Activated naive CD4-positive, alpha-beta T cell treated with anti-CD3 and anti-CD28 coated beads for 36 hours (primary cell): ENCODE measurements at regions of chr11 and their contacts with region 1.

Region 1: GRCh38 chr11:66408488-66409214 is 12.2 kb upstream of the NPAS4 start:
- DNase-seq: peak; percentile 93
- H3K4me3 Mint-ChIP-seq: peak overlapping the region; percentile 68
- H3K27ac Mint-ChIP-seq: no peak overlapping the region
- H3K4me1 Mint-ChIP-seq: peaks cover 4% of the 10 kb centered on the region
- H3K27me3 Mint-ChIP-seq: peaks cover 9% of the 10 kb centered on the region

Region 2: DNA sequence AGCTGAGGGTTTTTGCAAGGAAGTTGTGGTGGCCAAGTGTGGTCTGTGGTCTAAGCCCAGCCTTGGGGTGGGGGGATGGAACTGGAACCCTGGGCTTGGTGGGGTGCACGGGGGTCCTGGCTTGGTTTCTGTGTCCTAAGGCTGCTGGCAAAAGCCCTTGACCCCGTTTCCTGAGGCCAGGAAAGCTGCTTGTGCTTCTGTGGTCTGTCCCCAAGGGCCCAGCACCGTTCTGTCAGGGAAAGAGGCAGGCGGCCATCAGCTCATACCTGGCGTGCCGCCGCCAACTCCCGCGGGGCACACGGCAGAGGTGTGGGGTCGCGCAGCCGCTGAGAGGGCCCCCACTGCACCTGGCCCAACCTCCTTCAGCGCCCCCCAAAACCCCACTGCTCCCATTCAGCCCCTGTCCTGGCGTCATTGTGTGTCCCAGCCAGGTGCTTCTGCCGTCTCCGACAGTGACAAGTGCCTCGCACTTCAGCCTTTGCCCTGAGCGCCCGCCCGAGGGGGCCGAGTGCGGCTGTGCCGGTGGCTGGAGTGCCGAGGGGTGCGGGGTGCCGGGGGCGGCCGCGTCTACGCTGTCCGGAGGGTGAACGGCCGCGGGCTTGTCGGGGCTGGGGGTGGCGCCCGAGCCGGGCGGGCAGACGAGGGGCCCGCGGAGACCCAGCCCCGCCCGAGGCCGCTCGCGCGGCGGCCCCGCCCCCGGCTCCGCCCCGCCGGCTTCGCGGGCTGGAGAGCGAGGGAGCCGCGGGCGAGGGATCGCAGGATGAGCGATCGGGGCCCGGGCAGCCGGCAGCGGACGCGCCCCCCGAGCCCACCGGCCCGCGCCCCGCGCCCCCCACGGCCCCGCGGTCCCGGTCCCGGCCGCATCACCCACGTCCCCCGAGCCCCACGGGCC is 130.9 kb before region 1 on chr11 and contains the start of gene CNIH2:
- CTCF ChIA-PET with region 1: no interaction called
- intact Hi-C with region 1: no loop called
- DNase-seq: no peak
- H3K4me3 Mint-ChIP-seq: peak within 1 kb of the TSS; percentile 62
- H3K27ac Mint-ChIP-seq: no peak within 1 kb of the TSS
- H3K4me1 Mint-ChIP-seq: peaks cover 17% of the 10 kb centered on the region
- H3K27me3 Mint-ChIP-seq: no peaks in the 10 kb centered on the region
- total RNA-seq, gene CNIH2: 1.2 to 1.6 TPM

Region 3: GRCh38 chr11:66371627-66372415 is 36.8 kb before region 1 on chr11 and contains the start of gene SLC29A2:
- CTCF ChIA-PET with region 1: no interaction called
- intact Hi-C with region 1: loop called (anchors 1 kb)
- DNase-seq: peak; percentile 80
- H3K4me3 Mint-ChIP-seq: peak within 1 kb of the TSS; percentile 83
- H3K27ac Mint-ChIP-seq: peak within 1 kb of the TSS; percentile 90
- H3K4me1 Mint-ChIP-seq: peaks cover 15% of the 10 kb centered on the region
- H3K27me3 Mint-ChIP-seq: no peaks in the 10 kb centered on the region
- total RNA-seq, gene SLC29A2: 6.6 to 7.4 TPM

Region 4: DNA sequence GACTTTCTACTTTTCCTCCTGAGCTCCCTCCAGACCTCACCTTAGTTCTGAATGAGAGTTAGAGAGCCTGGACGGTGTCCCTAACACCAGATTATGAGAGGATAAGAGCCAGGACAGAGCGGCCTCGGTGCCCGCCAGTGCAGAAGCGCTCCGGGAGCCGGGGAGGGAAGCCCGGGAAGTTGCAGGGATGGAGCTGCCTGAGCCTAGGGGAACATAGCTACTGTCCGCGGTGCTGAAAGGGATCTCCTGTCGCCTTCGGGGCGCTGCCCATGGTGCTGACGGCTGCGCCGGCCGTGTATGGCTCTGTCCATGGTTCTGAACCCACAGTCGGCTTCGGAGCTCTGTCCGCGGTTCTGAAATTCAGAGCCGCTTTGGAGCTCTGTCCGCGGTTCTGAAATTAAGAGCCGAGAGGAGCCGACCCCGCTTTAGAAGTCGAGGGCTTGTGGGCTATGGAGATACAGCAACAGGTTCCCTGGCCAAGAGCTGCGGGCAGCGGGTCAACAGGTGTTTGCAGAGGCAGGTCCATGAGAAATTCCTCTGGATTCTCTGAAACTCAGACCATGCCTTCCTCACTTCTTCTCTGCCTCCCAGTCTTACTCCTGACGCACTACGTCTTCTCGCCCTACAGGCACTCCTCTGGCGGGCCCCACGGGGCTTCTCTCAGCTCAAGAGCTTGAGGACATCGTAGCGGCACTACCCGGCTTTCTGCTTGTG is 13.0 kb after region 1 on chr11:
- CTCF ChIA-PET with region 1: interaction called, 20 read pairs
- intact Hi-C with region 1: loop called (anchors 1 kb)
- DNase-seq: peak; percentile 93
- H3K4me3 Mint-ChIP-seq: no peak overlapping the region
- H3K27ac Mint-ChIP-seq: no peak overlapping the region
- H3K4me1 Mint-ChIP-seq: peaks cover 28% of the 10 kb centered on the region
- H3K27me3 Mint-ChIP-seq: peaks cover 32% of the 10 kb centered on the region

Region 5: DNA sequence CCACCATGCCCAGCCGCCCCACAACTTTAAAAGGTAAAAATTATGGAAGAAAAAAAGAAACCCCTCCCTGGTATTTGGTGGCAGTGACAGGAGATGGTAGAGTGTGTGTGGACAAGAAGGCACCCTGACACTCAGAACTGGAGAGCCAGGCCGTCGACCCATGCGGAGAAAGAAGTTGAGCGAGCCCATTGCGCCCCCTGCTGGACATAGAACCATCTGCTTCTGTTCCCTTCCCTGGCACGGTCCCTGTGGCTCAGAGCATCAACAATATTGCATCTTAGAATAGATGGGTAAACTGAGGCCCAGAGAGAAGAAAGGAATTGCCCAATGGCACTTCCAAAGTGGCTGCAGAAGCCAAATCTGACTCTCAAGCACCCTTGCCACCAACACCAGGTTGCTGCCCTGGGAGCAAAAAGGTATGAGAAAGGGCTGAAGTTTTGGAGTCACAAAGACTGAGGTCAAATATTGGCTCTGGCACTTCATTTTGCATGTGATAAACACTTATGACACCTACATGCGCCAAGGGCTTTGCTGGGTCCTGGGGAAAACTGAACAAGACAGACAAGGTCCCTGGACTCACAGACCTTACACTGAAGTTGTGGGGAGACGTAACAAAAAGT is 21.4 kb after region 1 on chr11:
- CTCF ChIA-PET with region 1: interaction called, 28 read pairs
- intact Hi-C with region 1: loop called (anchors 1 kb)
- DNase-seq: peak; percentile 85
- H3K4me3 Mint-ChIP-seq: no peak overlapping the region
- H3K27ac Mint-ChIP-seq: no peak overlapping the region
- H3K4me1 Mint-ChIP-seq: peaks cover 2% of the 10 kb centered on the region
- H3K27me3 Mint-ChIP-seq: no peaks in the 10 kb centered on the region

Region 6: GRCh38 chr11:66459138-66459778 is 50.6 kb after region 1 on chr11:
- CTCF ChIA-PET with region 1: no interaction called
- intact Hi-C with region 1: no loop called
- DNase-seq: no peak
- H3K4me3 Mint-ChIP-seq: no peak overlapping the region
- H3K27ac Mint-ChIP-seq: no peak overlapping the region
- H3K4me1 Mint-ChIP-seq: peaks cover 28% of the 10 kb centered on the region
- H3K27me3 Mint-ChIP-seq: no peaks in the 10 kb centered on the region

Region 7: GRCh38 chr11:66480117-66480938 is 71.7 kb after region 1 on chr11 and contains the start of gene DPP3:
- CTCF ChIA-PET with region 1: interaction called, 5 read pairs
- intact Hi-C with region 1: loop called (anchors 1 kb)
- DNase-seq: peak; percentile 97
- H3K4me3 Mint-ChIP-seq: peak within 1 kb of the TSS; percentile 89
- H3K27ac Mint-ChIP-seq: peak within 1 kb of the TSS; percentile 84
- H3K4me1 Mint-ChIP-seq: peaks cover 25% of the 10 kb centered on the region
- H3K27me3 Mint-ChIP-seq: no peaks in the 10 kb centered on the region
- total RNA-seq, gene DPP3: 73.8 to 80.1 TPM

Region 8: GRCh38 chr11:66638177-66639065 is 229.8 kb after region 1 on chr11 and contains the start of gene RBM4:
- CTCF ChIA-PET with region 1: no interaction called
- intact Hi-C with region 1: loop called (anchors 5 kb)
- DNase-seq: peak; percentile 99
- H3K4me3 Mint-ChIP-seq: peak within 1 kb of the TSS; percentile 95
- H3K27ac Mint-ChIP-seq: peak within 1 kb of the TSS; percentile 96
- H3K4me1 Mint-ChIP-seq: peaks cover 61% of the 10 kb centered on the region
- H3K27me3 Mint-ChIP-seq: no peaks in the 10 kb centered on the region
- total RNA-seq, gene RBM4: 85.9 to 98.1 TPM

Region 9: GRCh38 chr11:67482825-67483798 is 1074.5 kb after region 1 on chr11 and contains the start of gene AIP:
- CTCF ChIA-PET with region 1: no interaction called
- intact Hi-C with region 1: no loop called
- DNase-seq: peak; percentile 99
- H3K4me3 Mint-ChIP-seq: peak within 1 kb of the TSS; percentile 94
- H3K27ac Mint-ChIP-seq: peak within 1 kb of the TSS; percentile 99
- H3K4me1 Mint-ChIP-seq: peaks cover 34% of the 10 kb centered on the region
- H3K27me3 Mint-ChIP-seq: no peaks in the 10 kb centered on the region
- total RNA-seq, gene AIP: 163 to 166 TPM